Sigmoid colon (tissue), 7 donors: ENCODE measurements at regions of chr11 and their contacts with region 1.

Region 1: DNA sequence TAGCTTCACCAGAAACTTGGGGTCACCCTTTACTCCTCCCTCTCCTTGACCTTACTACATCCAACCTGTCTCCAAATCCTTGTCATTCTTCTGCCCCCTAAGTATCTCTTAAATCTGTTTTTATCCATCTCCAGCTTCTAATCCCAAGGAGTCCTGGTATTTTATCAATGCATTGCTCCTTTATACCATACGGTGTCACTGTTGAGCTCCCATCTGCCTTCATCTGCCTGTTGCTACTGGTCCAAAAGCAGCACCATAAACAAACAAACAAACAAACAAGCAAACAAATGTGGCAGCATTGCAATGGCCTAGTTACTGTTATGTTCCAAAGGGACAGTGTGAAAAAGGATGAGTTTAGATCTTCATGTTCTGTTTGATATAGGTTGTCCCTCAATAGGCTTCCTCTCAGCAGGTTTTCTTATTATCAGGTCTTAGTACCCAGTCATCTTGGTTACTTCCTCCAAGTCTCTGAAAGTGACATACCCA is 34.2 kb downstream of the DNHD1 start:
- DNase-seq: no peak
- H3K4me3 ChIP-seq: no peak overlapping the region
- H3K27ac ChIP-seq: no peak overlapping the region
- H3K4me1 ChIP-seq: peaks cover 0 to 11% (median 0%) of the 10 kb centered on the region in 4 donors
- H3K27me3 ChIP-seq: no peaks in the 10 kb centered on the region
- CTCF ChIP-seq: peak; percentile 78 to 90 (median 86)
- EP300 ChIP-seq: no peak
- POLR2A ChIP-seq: no peak

Region 2: GRCh38 chr11:6572215-6572614 is 40.9 kb after region 1 on chr11:
- intact Hi-C with region 1: loop called (anchors 5 kb)
- DNase-seq: no peak
- H3K4me3 ChIP-seq: no peak overlapping the region
- H3K27ac ChIP-seq: peak overlapping the region in 2 of 4 donors; percentile 18 to 60
- H3K4me1 ChIP-seq: peaks cover 0 to 43% (median 33%) of the 10 kb centered on the region in 4 donors
- H3K27me3 ChIP-seq: no peaks in the 10 kb centered on the region
- CTCF ChIP-seq: no peak
- EP300 ChIP-seq: no peak
- POLR2A ChIP-seq: no peak